ENCODE measurements at regions of chr20 and their contacts with region 1.

Region 1: DNA sequence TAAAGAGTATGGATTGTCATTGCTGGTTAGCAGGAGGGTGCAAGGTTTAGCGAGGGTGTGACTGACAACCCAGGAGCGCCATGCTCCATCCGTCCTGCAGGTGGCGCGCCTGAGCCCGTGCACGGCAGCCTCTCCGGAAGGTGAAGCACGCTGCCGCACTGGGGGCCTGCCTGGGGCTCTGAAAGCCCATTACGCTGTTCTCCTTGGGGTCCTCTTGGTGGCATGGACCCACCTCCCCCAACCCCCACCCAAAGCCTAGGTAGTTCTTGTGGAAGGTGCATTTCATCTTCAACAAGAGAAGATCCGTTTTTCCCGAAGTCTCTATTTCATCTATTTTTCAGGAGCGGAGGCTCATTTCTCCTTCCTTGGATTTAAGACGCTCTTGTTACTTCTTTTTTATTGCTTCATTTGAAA is 197.4 kb upstream of the KCNG1 start:
- DNase-seq: peak; percentile 65
- ATAC-seq: peak; percentile 73
- H3K4me3 ChIP-seq: peak overlapping the region; percentile 26; the same call in 1 of the 2 replicates
- H3K27ac ChIP-seq: no peak overlapping the region
- H3K4me1 ChIP-seq: peaks cover 11% of the 10 kb centered on the region
- H3K27me3 ChIP-seq: no peaks in the 10 kb centered on the region
- CTCF ChIP-seq: peak; percentile 99

Region 2: DNA sequence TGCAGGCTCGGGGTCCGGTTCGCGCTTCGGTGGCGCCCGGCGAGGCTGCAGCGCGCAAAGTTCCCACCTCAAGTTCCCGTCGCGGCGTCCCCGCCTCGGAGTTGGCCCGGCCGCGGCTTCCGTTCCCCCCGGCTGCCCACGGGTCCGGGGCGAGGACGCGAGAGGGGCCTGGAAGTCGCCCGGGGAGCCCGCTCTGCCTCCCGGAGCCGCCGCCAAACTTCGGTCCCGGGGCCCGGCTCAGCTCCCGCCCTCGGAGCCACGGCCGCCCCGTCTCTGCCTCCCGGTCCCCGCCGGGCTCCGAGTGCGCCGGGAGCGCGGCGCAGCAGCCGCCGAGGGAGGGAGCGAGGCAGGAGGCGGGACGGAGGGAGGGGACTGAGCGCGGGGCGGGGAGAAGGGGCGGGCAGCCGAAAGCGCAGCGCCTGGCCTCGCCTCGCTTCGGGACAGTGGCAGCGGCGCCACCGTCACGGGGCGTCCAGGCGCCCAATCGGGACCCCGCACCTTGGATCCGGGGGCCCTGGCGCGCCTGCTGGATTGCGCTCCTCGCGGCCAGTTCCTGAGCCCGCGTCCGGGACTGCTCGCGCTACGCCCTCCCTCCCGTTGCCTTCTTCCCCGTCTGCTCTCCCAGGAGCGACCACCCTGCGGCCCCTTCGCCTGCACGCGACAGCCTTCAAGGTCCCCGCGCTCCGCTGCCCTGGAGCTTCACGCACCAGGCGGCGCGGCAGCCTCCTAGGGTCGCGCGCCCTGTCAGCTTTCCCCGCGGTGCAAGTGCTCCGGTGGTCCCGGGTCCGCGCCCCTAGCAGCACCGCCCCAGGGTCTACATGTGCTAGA is 197.3 kb before region 1 on chr20 and contains the start of gene KCNG1:
- CTCF ChIA-PET with region 1: no interaction called
- POLR2A ChIA-PET with region 1: no interaction called
- intact Hi-C with region 1: loop called (anchors 5 kb)
- DNase-seq: peak; percentile 95
- ATAC-seq: peak; percentile 97
- H3K4me3 ChIP-seq: peak within 1 kb of the TSS; percentile 72
- H3K27ac ChIP-seq: no peak within 1 kb of the TSS
- H3K4me1 ChIP-seq: peaks cover 21% of the 10 kb centered on the region
- H3K27me3 ChIP-seq: no peaks in the 10 kb centered on the region
- CTCF ChIP-seq: no peak
- total RNA-seq, gene KCNG1: 61.5 and 74.1 TPM in 2 replicates

Region 3: GRCh38 chr20:51412333-51412871 is 192.1 kb after region 1 on chr20:
- CTCF ChIA-PET with region 1: no interaction called
- POLR2A ChIA-PET with region 1: no interaction called
- intact Hi-C with region 1: no loop called
- DNase-seq: no peak
- ATAC-seq: no peak
- H3K4me3 ChIP-seq: no peak overlapping the region
- H3K27ac ChIP-seq: no peak overlapping the region
- H3K4me1 ChIP-seq: no peaks in the 10 kb centered on the region
- H3K27me3 ChIP-seq: no peaks in the 10 kb centered on the region
- CTCF ChIP-seq: no peak